ENCODE measurements at regions of chr6 and their contacts with region 1.

Region 1: DNA sequence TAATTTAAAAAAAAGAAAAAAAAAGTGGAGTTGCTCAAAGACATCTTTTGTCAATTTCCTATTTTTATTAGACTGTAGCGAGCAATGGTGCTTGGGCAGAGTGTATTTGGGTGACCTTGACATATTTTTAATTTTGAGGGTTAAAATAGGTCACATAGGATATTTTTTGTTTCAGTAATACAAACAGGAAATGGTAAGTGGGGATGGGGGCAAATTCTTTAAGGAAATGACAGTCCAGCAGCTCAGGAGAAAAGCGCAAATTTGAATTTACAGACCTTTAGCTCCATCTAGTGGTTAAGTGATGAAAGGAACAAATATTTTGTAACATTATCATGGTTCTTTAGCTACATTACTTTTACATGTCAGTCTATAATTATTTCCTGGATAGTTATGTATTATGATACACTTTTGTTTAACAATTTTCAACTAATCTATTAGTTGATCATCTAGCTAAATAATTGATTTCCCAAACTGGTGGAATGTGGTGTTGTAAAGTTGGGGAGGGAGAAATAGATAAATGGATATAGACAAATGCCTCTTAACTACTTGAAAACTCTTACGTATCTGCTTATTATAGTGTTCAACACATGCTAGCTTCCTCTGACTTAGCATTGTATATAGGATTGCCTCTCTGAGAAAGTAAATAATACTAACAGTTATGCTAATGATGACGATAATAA is 10.0 kb downstream of the CITED2 start:
- DNase-seq: no peak
- H3K4me3 ChIP-seq: no peak overlapping the region
- H3K27ac ChIP-seq: no peak overlapping the region
- H3K4me1 ChIP-seq: peaks cover 0 to 20% (median 8%) of the 10 kb centered on the region in 4 donors
- H3K27me3 ChIP-seq: no peaks in the 10 kb centered on the region
- CTCF ChIP-seq: peak; percentile 66 to 88

Region 2: GRCh38 chr6:139219271-139219729 is 145.1 kb before region 1 on chr6:
- intact Hi-C with region 1: loop called (anchors 5 kb)
- DNase-seq: peak; percentile 87 to 88
- H3K4me3 ChIP-seq: no peak overlapping the region
- H3K27ac ChIP-seq: peak overlapping the region in 1 of 2 donors; percentile 4
- H3K4me1 ChIP-seq: peaks cover 0 to 7% (median 3%) of the 10 kb centered on the region in 4 donors
- H3K27me3 ChIP-seq: no peaks in the 10 kb centered on the region
- CTCF ChIP-seq: peak; percentile 79 to 81

Region 3: GRCh38 chr6:139422105-139423036 is 57.9 kb after region 1 on chr6:
- intact Hi-C with region 1: no loop called
- DNase-seq: no peak
- H3K4me3 ChIP-seq: no peak overlapping the region
- H3K27ac ChIP-seq: no peak overlapping the region
- H3K4me1 ChIP-seq: no peaks in the 10 kb centered on the region
- H3K27me3 ChIP-seq: no peaks in the 10 kb centered on the region
- CTCF ChIP-seq: no peak